GM23248 (cell line): ENCODE measurements at regions of chr12 and their contacts with region 1.

Region 1: DNA sequence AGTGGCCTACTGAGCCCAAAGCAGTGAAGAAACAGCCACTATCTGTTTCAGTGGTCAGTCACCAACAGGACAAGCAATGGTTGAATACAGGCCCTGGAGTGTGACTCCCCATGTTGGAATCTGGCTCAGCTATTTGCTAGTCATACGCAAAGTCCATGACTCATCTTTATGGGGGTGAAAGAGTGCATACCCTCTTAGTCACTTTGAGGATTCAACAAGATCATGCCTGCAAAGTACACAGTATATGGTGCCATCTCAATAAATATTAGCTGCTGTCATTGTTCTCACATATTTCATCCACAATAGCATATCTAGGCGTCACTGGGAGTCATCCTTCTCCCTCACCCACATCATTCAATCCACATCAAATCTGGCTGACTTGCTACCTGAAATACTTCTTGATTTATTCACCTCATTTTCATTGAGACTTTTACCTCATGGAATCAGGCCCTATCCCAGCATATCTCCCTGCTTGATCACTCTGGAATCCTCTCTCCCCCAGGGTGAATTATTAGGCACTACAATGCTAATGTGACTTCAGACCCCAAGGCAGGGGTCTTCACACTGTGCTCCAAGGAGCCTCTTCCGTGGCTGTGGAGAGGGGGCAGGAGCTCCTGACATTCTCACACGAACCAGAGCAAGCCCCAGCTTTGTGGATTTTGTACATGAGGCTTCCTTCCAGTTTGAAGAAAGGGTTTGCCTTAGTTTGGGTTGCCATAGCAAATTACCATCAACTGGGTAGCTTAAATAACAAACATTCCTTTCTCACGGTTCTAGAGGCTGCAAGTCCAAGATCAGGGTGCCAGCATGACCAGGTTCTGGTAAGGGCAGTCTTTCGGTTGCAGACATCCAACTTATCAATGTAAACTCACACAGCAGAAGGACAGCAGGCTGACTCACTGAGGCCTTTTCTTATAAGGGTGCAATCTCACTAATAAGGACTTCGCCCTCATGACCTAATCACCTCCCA is 26.2 kb upstream of the STAB2 start:
- DNase-seq: peak; percentile 99
- H3K4me3 ChIP-seq: no peak overlapping the region
- H3K27ac ChIP-seq: peak overlapping the region; percentile 89
- H3K4me1 ChIP-seq: peaks cover 22% of the 10 kb centered on the region
- H3K27me3 ChIP-seq: no peaks in the 10 kb centered on the region

Region 2: DNA sequence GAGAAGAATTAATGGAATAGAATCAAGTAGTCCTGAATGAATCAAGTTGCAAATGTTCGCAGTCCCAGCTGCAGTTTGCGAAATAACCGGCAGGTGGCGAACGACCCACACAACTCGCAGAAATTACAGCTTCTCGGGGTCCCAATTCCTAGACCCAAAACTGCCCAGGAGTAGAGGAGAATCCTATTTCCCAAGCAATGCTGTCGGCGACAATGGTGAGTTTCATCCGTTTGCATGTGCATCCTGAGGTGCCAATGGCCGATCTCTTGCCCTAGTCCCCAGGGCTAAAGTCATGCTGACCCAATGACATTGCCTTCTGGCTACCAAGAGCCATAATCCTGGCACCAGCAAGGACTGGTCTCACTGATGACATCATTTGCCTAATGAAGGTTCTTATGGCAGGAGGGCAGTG is 611.9 kb before region 1 on chr12:
- in situ Hi-C with region 1: loop called (anchors 5 kb)
- DNase-seq: peak; percentile 47
- H3K4me3 ChIP-seq: no peak overlapping the region
- H3K27ac ChIP-seq: no peak overlapping the region
- H3K4me1 ChIP-seq: no peaks in the 10 kb centered on the region
- H3K27me3 ChIP-seq: peaks cover 38% of the 10 kb centered on the region

Region 3: DNA sequence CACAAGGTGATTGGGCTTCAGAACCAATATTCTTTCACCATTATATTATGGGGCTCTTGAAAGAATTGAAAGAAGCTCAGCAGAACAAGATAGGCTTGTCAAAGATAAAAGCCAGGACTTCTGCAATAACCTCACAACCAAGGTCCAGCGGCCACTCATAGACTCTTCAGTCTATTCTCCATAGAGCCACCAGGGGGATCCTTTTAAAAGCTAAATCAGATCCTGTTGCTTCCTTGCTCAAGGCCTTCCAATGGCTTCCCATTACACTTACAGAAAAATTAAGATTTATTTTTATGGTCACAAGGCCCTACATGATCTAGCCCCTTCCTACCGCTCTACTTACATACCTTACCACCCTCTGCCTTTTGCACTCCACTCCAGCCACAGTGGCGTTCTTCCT is 234.7 kb before region 1 on chr12:
- in situ Hi-C with region 1: no loop called
- DNase-seq: peak; percentile 2
- H3K4me3 ChIP-seq: no peak overlapping the region
- H3K27ac ChIP-seq: no peak overlapping the region
- H3K4me1 ChIP-seq: no peaks in the 10 kb centered on the region
- H3K27me3 ChIP-seq: no peaks in the 10 kb centered on the region